ENCODE measurements at regions of chr5 and their contacts with region 1.

Region 1: GRCh38 chr5:177362610-177363507 is 5.1 kb downstream of the RGS14 start:
- DNase-seq: peak; percentile 86
- CTCF ChIP-seq: no peak

Region 2: DNA sequence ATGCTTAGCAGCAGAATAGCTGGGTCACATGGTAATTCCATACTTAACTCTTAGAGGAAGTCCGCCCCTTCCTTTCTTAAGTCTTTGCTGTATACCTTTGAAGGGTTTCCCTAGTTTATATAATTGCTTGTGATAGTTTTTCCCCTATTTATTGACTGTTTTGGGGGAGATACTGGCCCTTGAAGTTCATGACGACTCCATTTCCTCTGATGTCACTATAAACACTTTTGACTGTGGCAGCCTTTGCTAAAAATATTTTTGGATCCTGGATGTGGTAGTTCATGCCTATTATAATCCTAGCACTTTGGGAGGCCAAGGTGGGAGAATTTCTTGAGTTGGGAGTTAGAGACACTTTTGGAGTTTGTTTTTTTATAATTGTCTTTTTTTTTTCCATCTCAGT is 190.9 kb before region 1 on chr5:
- CTCF ChIA-PET with region 1: no interaction called
- POLR2A ChIA-PET with region 1: no interaction called
- DNase-seq: no peak
- CTCF ChIP-seq: no peak

Region 3: GRCh38 chr5:177351385-177352329 is 11.2 kb before region 1 on chr5 and contains the start of gene LMAN2:
- CTCF ChIA-PET with region 1: interaction called, 734 read pairs
- POLR2A ChIA-PET with region 1: interaction called, 6 read pairs
- DNase-seq: peak; percentile 94
- CTCF ChIP-seq: no peak

Measured in GM10248 (cell line).